ENCODE measurements at regions of chr19 and their contacts with region 1.

Region 1: DNA sequence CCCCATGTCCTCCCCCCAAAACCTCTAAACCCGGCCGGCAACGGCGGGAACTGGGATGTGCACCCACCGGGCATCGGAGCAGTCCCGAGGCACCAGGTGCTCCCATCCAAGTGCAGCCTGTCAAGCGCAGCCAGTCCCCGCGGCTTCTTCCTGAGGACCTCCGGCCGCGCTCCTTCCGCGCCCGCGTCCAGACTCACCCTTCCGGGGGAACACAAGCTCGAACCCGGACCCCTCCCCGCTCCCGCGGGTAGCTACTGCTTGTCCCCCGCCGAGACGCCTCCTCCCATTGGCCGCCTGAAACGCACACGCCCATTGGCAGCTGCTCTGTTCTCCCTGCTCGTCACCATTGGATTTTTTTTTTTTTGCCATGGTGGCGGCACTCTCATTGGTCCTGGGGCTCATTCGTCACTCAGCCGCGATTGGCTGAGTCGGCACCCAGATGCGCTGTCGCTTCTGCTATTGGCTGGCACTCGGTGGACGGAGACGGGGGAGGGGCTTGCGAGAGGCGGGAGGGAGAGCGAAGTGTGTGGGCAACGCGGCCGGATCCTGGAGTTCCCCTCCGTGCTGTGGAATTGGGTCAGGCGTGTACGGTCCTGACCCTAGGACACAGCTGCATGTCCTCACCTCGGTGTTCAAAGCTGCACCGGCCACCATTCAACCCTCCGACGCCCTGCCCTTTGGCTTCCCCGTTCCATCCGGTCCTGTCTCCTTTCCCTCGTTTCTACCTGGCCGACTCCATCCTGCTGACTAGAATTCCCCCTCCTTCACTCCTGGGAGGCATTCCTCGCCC is at the start of gene TYK2:
- DNase-seq: peak; percentile 97
- H3K4me3 ChIP-seq: peak within 1 kb of the TSS; percentile 66 to 99 (median 73)
- H3K27ac ChIP-seq: peak within 1 kb of the TSS; percentile 44 to 91 (median 65)
- H3K4me1 ChIP-seq: peaks cover 12 to 14% of the 10 kb centered on the region in 2 donors
- H3K27me3 ChIP-seq: no peaks in the 10 kb centered on the region
- CTCF ChIP-seq: peak in 1 of 6 experiments; percentile 7
- POLR2A ChIP-seq: peak in 1 of 2 donors; percentile 58
- total RNA-seq, gene TYK2: 59.1 to 127 (median 70.3) TPM

Region 2: DNA sequence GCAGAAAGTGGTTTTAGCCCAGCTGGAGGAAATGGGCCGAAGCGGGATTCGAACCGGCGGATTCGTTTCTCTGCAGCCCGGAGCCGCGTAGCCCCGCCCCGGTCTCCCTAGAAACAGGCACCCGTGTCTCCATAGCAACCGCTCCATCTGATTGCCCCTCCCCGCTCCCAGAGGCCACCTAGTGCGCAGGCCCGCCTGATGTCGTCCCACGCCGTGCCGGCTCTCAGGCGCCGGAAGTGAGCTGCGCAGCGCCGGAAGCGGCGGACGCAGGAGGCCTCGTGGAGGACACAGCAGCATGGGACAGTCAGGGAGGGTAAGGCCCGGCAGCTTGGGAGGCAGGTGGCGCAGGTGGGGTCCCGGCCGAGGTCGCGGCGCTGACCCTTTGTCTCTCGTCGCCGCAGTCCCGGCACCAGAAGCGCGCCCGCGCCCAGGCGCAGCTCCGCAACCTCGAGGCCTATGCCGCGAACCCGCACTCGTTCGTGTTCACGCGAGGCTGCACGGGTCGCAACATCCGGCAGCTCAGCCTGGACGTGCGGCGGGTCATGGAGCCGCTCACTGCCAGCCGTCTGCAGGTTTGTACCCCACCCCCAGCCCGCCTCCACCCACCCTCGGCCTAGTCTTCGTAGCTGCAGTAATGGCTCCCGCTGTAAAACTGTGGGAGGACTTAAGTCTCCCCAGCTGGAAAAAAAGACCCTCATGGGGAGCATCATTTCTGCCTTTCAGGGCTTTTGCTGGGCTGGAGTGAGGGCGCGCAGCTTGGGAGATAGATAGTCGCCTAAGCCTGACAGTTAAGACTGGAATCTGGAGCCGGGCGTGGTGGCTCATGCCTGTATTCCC is 274.2 kb before region 1 on chr19 and contains the start of gene PPAN:
- intact Hi-C with region 1: loop called (anchors 10 kb)
- DNase-seq: peak; percentile 98
- H3K4me3 ChIP-seq: peak within 1 kb of the TSS; percentile 21 to 56 (median 28)
- H3K27ac ChIP-seq: peak within 1 kb of the TSS in 2 of 3 donors; percentile 35 to 45
- H3K4me1 ChIP-seq: peaks cover 7 to 14% of the 10 kb centered on the region in 2 donors
- H3K27me3 ChIP-seq: no peaks in the 10 kb centered on the region
- CTCF ChIP-seq: no peak
- POLR2A ChIP-seq: peak in 1 of 2 donors; percentile 64
- total RNA-seq, gene PPAN: 26.2 to 33.0 (median 29.7) TPM

Region 3: GRCh38 chr19:10334588-10335351 is 45.7 kb before region 1 on chr19:
- intact Hi-C with region 1: loop called (anchors 5 kb)
- DNase-seq: peak; percentile 97 to 98
- H3K4me3 ChIP-seq: peak overlapping the region; percentile 16 to 75 (median 17)
- H3K27ac ChIP-seq: peak overlapping the region; percentile 3 to 62 (median 18)
- H3K4me1 ChIP-seq: peaks cover 11 to 24% of the 10 kb centered on the region in 2 donors
- H3K27me3 ChIP-seq: no peaks in the 10 kb centered on the region
- CTCF ChIP-seq: peak in 1 of 6 experiments; percentile 8
- POLR2A ChIP-seq: peak in 1 of 2 donors; percentile 74

Region 4: GRCh38 chr19:10403137-10404021 is 22.9 kb after region 1 on chr19 and contains the start of gene CDC37:
- intact Hi-C with region 1: no loop called
- DNase-seq: peak; percentile 95 to 96
- H3K4me3 ChIP-seq: peak within 1 kb of the TSS; percentile 73 to 81 (median 78)
- H3K27ac ChIP-seq: peak within 1 kb of the TSS; percentile 33 to 64 (median 57)
- H3K4me1 ChIP-seq: peaks cover 25 to 35% of the 10 kb centered on the region in 2 donors
- H3K27me3 ChIP-seq: peaks cover 6% of the 10 kb centered on the region
- CTCF ChIP-seq: no peak
- POLR2A ChIP-seq: peak; percentile 34 to 82
- total RNA-seq, gene CDC37: 99.7 to 154 (median 125) TPM